Left lung (tissue), 14 donors: ENCODE measurements at regions of chr11 and their contacts with region 1.

Region 1: GRCh38 chr11:30346068-30346688 is 23.3 kb downstream of the ARL14EP start:
- DNase-seq: peak in 2 of 4 donors; percentile 50 to 81
- ATAC-seq: peak; percentile 71
- H3K4me3 ChIP-seq: no peak overlapping the region
- H3K27ac ChIP-seq: no peak overlapping the region
- H3K4me1 ChIP-seq: no peaks in the 10 kb centered on the region
- H3K27me3 ChIP-seq: no peaks in the 10 kb centered on the region
- CTCF ChIP-seq: peak; percentile 42 to 49

Region 2: DNA sequence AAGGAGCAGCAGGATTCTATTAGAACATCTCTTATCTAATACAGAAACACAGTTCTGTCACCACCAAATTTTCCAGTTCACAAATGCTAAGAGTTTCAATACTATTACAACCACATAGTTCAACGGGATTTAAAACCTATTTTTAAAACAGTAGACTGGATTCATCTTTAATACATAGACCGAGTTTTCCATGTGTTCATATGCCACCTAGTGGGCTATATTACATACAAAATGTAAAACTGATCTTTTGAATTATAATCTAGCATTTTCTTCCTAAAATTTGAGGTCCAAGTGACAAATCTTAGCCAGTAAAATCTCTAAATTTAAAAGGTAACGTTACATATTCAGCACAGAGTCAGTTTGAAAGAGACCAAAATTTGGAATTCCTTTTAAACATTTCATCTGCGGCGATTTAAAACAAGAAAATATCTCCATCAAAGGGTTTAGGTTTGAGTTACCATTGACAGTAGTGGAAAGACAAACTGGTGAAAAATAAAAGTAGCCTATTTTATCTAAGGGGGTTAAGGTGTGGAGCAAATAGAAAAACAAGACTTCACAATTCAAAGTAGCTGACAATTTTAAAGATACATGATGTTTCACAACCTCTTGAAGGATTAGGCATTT is 509.3 kb after region 1 on chr11:
- intact Hi-C with region 1: loop called in 1 of 2 experiments (anchors 10 kb)
- DNase-seq: peak in 1 of 4 donors; percentile 37
- ATAC-seq: no peak
- H3K4me3 ChIP-seq: no peak overlapping the region
- H3K27ac ChIP-seq: no peak overlapping the region
- H3K4me1 ChIP-seq: no peaks in the 10 kb centered on the region
- H3K27me3 ChIP-seq: no peaks in the 10 kb centered on the region
- CTCF ChIP-seq: peak in 1 of 2 donors; percentile 31

Region 3: DNA sequence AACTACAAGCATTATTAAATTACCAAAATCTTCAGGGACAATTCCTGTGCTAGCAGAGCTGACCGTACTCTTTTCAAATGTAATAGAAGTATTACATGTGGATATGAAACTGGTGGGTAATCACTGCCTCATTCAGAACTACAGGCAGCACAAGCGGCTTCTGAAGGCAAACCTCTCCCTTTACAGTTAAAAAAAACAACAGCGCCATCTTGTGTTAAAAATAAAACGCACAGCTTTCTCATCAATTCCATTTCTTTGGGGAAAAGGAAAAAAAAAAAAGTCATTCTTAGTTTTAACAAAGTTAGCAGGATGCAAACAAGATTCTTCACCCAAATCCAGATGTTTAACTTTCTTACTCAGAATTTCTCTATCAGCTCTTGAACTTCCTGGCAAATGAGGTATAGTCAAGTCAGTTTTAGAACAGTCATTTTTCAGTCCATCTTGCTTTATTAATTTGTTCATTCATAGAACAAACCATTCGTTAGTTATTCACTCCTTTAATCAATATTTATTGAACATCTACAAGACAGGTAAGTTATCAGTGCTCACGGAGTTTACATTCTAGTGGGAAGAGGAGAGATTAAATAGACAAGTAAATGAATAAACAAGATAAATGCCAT is 571.8 kb after region 1 on chr11:
- intact Hi-C with region 1: loop called in 1 of 2 experiments (anchors 10 kb)
- DNase-seq: peak in 2 of 4 donors; percentile 48 to 74
- ATAC-seq: peak; percentile 68
- H3K4me3 ChIP-seq: no peak overlapping the region
- H3K27ac ChIP-seq: no peak overlapping the region
- H3K4me1 ChIP-seq: no peaks in the 10 kb centered on the region
- H3K27me3 ChIP-seq: no peaks in the 10 kb centered on the region
- CTCF ChIP-seq: peak; percentile 55 to 64